ENCODE measurements at regions of chr1 and their contacts with region 1.

Region 1: GRCh38 chr1:150561974-150562445 is 12.8 kb downstream of the ADAMTSL4 start:
- DNase-seq: peak; percentile 93
- H3K4me3 Mint-ChIP-seq: peak overlapping the region; percentile 87
- H3K27ac Mint-ChIP-seq: peak overlapping the region; percentile 100
- H3K4me1 Mint-ChIP-seq: peaks cover 62% of the 10 kb centered on the region
- H3K27me3 Mint-ChIP-seq: no peaks in the 10 kb centered on the region

Region 2: GRCh38 chr1:150235852-150236613 is 326.0 kb before region 1 on chr1 and contains the start of gene ANP32E:
- CTCF ChIA-PET with region 1: interaction called, 4 read pairs
- POLR2A ChIA-PET with region 1: interaction called, 11 read pairs
- DNase-seq: peak; percentile 96
- H3K4me3 Mint-ChIP-seq: no peak within 1 kb of the TSS
- H3K27ac Mint-ChIP-seq: no peak within 1 kb of the TSS
- H3K4me1 Mint-ChIP-seq: peaks cover 22% of the 10 kb centered on the region
- H3K27me3 Mint-ChIP-seq: no peaks in the 10 kb centered on the region
- total RNA-seq, gene ANP32E: 185 TPM

Region 3: DNA sequence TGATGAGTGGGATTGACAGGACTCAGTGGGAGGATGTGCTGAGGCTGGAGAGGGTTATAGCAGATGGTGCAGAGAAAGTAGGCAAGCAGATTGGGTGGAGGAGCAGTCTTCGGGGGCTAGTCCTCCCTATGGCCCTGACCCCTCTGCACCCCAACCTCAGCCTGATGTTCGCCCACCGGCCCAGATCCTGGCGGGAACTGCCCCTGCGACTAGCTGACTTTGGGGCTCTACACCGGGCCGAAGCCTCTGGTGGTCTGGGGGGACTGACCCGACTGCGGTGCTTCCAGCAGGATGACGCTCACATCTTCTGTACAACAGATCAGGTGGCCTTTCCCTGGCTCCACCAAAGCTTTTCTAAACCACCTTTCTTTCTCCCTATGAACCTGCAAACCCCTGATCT is 63.7 kb before region 1 on chr1:
- CTCF ChIA-PET with region 1: no interaction called
- POLR2A ChIA-PET with region 1: no interaction called
- DNase-seq: no peak
- H3K4me3 Mint-ChIP-seq: no peak overlapping the region
- H3K27ac Mint-ChIP-seq: no peak overlapping the region
- H3K4me1 Mint-ChIP-seq: no peaks in the 10 kb centered on the region
- H3K27me3 Mint-ChIP-seq: no peaks in the 10 kb centered on the region

Region 4: GRCh38 chr1:150515328-150516048 is 46.5 kb before region 1 on chr1 and contains the start of gene FALEC:
- CTCF ChIA-PET with region 1: interaction called, 19 read pairs
- POLR2A ChIA-PET with region 1: interaction called, 10 read pairs
- DNase-seq: peak; percentile 93
- H3K4me3 Mint-ChIP-seq: peak within 1 kb of the TSS; percentile 75
- H3K27ac Mint-ChIP-seq: peak within 1 kb of the TSS; percentile 56
- H3K4me1 Mint-ChIP-seq: peaks cover 26% of the 10 kb centered on the region
- H3K27me3 Mint-ChIP-seq: peaks cover 2% of the 10 kb centered on the region
- total RNA-seq, gene FALEC: not detected

Region 5: DNA sequence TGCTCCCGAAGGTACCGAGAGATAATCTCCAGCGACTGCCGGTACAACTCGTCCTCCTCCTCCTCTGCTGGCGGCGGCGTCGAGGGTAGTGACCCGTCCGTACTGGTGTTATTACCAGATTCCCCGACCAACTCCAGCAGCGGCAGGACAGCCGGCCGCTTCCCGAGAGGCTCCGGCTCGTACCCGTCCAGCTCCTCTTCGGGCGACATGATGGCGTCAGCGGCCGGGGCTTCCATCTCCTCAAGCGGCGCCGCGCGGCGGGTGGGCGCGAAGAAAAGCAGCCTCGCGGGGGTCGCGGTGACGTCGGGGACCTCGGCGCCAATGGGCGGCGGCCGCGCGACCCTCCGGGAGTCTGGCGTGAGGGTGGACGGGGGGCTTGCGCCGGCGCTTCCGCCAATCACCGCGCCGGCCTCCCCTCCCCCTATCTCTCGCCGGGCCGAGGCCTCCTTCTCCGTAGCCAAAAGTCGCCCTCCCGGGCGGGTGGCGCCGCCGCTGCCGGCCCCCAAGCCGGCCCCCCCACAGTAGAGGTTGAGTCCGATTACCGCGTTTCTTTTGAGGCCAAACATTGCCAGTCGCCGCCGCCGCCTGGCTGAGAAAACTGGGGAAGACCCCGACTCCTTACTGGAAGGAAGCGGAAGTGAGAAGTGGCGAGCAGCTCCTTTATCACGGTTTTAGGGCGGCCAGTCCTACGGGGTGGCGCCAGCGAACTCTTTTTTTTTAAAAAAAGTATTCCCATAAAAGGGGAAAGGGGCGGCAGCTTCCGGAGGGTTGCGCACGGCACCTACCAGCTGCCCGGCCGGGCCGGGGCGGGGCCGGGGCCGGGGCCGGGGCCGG is 17.2 kb after region 1 on chr1 and contains the start of gene MCL1:
- CTCF ChIA-PET with region 1: interaction called, 282 read pairs
- POLR2A ChIA-PET with region 1: interaction called, 1,377 read pairs
- DNase-seq: peak; percentile 93
- H3K4me3 Mint-ChIP-seq: peak within 1 kb of the TSS; percentile 98
- H3K27ac Mint-ChIP-seq: peak within 1 kb of the TSS; percentile 97
- H3K4me1 Mint-ChIP-seq: peaks cover 26% of the 10 kb centered on the region
- H3K27me3 Mint-ChIP-seq: no peaks in the 10 kb centered on the region
- total RNA-seq, gene MCL1: 470 to 472 TPM

Region 6: DNA sequence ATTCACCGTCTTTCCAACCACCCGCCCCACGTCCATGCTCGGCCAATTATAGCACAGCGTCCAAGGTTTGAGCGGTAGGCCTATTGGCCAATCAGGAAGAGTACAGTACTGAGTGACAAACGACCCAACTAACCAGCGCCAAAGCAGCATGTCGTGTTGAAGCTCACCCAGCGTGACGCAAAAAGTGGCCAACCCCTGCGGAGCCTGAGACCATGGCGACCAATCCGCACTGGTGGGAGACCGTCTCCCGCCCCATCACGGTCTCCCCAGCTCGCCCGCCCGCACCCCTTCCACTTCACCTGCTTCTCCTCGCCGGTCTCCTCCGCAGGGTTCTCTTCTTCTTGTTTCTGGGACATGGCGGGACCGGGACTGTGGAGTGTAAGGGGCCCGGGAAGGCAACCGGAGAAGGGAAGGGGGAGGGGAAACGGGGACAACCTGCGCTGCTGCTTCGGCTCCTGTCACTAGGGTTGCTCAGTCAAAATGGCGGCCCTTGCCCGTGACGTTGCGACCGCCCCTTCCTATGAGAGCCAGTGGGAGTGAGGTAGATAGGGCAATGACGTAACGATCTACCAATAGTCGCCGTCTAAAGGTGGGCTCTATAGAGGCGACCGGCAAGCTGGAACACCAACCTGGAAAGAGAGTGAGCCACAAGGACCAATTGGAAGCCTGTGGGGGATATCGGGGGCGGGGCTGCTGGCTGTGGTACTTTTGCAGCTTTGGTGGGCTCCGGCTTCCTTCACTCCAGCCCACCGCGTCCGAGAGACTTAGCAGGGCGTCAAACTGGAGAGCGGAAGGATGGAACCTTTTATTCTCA is 67.3 kb after region 1 on chr1 and contains the start of gene ENSA:
- CTCF ChIA-PET with region 1: interaction called, 264 read pairs
- POLR2A ChIA-PET with region 1: interaction called, 402 read pairs
- DNase-seq: peak; percentile 97
- H3K4me3 Mint-ChIP-seq: no peak within 1 kb of the TSS
- H3K27ac Mint-ChIP-seq: no peak within 1 kb of the TSS
- H3K4me1 Mint-ChIP-seq: peaks cover 28% of the 10 kb centered on the region
- H3K27me3 Mint-ChIP-seq: no peaks in the 10 kb centered on the region
- total RNA-seq, gene ENSA: 221 to 223 TPM

Region 7: DNA sequence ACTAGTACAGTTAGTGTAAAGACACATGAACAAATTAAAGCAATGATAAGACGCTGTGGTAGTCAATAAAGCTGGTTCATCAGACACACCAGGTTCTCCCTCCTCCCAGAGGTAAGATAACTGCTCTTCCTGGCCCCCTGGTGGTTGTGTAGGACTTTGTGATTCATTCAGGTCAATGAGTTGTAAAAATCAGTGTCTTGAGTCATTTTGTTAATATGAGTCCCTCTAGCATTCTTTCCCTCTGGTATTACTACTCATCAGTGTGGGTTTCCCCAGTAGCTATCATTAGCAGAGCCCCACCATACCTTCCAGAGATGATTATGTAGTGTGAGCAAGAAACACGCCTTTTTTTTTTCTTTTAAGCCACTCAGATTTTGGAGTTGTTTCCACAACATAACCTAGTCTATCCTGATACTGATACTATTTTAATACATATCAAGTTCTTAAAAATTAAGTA is 360.5 kb after region 1 on chr1:
- CTCF ChIA-PET with region 1: interaction called, 10 read pairs
- POLR2A ChIA-PET with region 1: interaction called, 6 read pairs
- DNase-seq: peak; percentile 83
- H3K4me3 Mint-ChIP-seq: no peak overlapping the region
- H3K27ac Mint-ChIP-seq: no peak overlapping the region
- H3K4me1 Mint-ChIP-seq: peaks cover 29% of the 10 kb centered on the region
- H3K27me3 Mint-ChIP-seq: no peaks in the 10 kb centered on the region

Measured in activated CD4-positive, alpha-beta memory T cell treated with anti-CD3 and anti-CD28 coated beads, Interleukin-2, amount 10 ng/mL, durations not matched to agents 7 days and 5 days (primary cell).